Tibial artery (tissue), 4 donors: ENCODE measurements at regions of chr17 and their contacts with region 1.

Region 1: GRCh38 chr17:18260332-18261144 is at the start of gene MIEF2:
- DNase-seq: peak; percentile 95 to 97
- H3K4me3 ChIP-seq: peak within 1 kb of the TSS; percentile 69 to 87
- H3K27ac ChIP-seq: peak within 1 kb of the TSS; percentile 92 to 98
- H3K4me1 ChIP-seq: peaks cover 0 to 54% (median 45%) of the 10 kb centered on the region in 4 donors
- H3K27me3 ChIP-seq: no peaks in the 10 kb centered on the region
- CTCF ChIP-seq: no peak

Region 2: GRCh38 chr17:18314731-18315561 is 54.4 kb after region 1 on chr17 and contains the starts of genes SMCR8 and TOP3A:
- intact Hi-C with region 1: loop called (anchors 5 kb)
- DNase-seq: peak; percentile 99 to 100
- H3K4me3 ChIP-seq: peak within 1 kb of the TSS; percentile 76 to 85
- H3K27ac ChIP-seq: peak within 1 kb of the TSS; percentile 88 to 91
- H3K4me1 ChIP-seq: peaks cover 0 to 65% (median 60%) of the 10 kb centered on the region in 4 donors
- H3K27me3 ChIP-seq: no peaks in the 10 kb centered on the region
- CTCF ChIP-seq: peak in 1 of 2 experiments; percentile 7